ENCODE measurements at regions of chr14 and their contacts with region 1.

Region 1: DNA sequence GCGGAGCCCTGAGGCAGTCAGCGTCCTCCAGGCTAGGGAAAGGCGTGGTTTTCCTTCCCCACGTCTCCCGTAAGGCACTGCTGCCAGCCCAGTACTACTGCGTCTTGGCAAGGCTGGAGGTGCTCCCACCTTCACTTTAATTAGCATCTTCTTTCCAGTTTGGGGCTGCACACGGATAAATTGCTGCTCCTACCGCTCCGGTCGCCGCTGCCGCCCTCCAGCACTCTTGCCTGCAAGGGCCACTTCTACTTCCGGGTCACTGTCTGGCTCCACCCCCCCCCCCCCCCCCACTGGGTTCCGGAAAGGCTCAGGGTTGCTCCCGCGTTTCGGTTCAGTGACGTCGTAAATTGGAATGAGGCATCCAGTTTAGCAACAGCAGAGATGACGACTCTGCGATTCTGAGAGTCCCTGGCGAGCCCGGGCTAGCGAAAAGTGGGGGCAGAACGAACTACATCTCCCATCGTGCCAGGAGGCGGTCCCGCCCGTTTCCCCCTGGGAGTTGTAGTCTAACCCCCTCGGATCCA is at the start of gene NEDD8:
- DNase-seq: peak; percentile 89 to 93
- ATAC-seq: peak; percentile 92 to 95
- H3K4me3 ChIP-seq: peak within 1 kb of the TSS; percentile 71 to 91 (median 86)
- H3K27ac ChIP-seq: peak within 1 kb of the TSS; percentile 85 to 96 (median 92)
- H3K4me1 ChIP-seq: peaks cover 32 to 41% of the 10 kb centered on the region in 2 donors
- H3K27me3 ChIP-seq: no peaks in the 10 kb centered on the region
- CTCF ChIP-seq: no peak
- POLR2A ChIP-seq: peak; percentile 54 to 81
- total RNA-seq, gene NEDD8: 141 to 178 (median 162) TPM

Region 2: GRCh38 chr14:24146978-24147760 is 85.0 kb before region 1 on chr14 and contains the start of gene RNF31:
- in situ Hi-C with region 1: no loop called
- intact Hi-C with region 1: loop called (anchors 2 kb)
- DNase-seq: peak; percentile 98 to 99
- ATAC-seq: peak; percentile 89 to 94
- H3K4me3 ChIP-seq: peak within 1 kb of the TSS; percentile 75 to 92 (median 84)
- H3K27ac ChIP-seq: peak within 1 kb of the TSS; percentile 92 to 97 (median 92)
- H3K4me1 ChIP-seq: peaks cover 21% of the 10 kb centered on the region in 2 donors
- H3K27me3 ChIP-seq: no peaks in the 10 kb centered on the region
- CTCF ChIP-seq: no peak
- POLR2A ChIP-seq: peak; percentile 72 to 82
- total RNA-seq, gene RNF31: 63.3 to 140 (median 82.4) TPM

Region 3: DNA sequence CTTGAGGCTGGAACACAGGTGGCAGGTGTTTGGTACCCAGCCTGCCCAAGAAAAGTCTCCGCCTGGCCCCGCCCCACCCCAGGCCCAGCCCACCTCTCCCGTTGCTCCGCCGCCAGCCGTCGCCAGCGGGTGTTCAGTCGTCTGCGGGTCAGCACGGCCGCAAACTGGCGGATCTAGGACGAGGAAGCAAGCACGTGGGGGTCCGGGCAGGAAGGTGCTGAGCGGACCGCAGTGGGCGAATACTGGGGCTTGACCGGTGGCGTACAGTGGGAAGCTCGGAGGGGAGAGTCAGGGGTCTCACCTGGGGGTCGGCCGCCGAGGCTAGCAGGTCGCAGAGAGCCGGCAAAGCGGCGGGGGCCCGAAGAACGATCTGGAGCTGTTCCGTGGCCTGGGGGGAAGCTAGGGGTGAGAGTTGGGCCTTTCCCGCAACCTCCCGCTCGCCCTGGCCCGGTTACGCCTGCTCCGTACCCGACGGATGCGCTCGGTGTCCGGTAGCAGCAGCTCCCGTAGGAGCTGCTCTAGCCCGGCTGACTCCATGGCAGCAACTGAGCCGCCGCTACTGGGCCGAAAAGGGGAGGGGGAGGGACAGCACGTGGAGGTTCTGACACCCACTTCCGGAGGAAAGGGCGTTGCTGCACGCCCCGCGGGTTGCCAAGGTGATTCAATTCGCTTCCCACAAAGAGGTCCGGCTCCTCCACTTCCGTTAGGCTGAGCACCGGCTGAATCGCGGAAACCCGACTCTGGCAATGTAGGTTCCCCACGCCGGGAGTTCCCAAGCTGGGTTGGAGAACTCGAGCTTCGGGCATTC is 43.7 kb before region 1 on chr14 and contains the start of gene IPO4:
- in situ Hi-C with region 1: no loop called
- intact Hi-C with region 1: loop called (anchors 1 kb)
- DNase-seq: peak; percentile 96 to 97
- ATAC-seq: peak; percentile 99
- H3K4me3 ChIP-seq: peak within 1 kb of the TSS; percentile 62 to 84 (median 82)
- H3K27ac ChIP-seq: peak within 1 kb of the TSS; percentile 83 to 90 (median 86)
- H3K4me1 ChIP-seq: peaks cover 12 to 16% of the 10 kb centered on the region in 2 donors
- H3K27me3 ChIP-seq: no peaks in the 10 kb centered on the region
- CTCF ChIP-seq: no peak
- POLR2A ChIP-seq: peak; percentile 86
- total RNA-seq, gene IPO4: 35.7 to 73.2 (median 55.4) TPM

Region 4: DNA sequence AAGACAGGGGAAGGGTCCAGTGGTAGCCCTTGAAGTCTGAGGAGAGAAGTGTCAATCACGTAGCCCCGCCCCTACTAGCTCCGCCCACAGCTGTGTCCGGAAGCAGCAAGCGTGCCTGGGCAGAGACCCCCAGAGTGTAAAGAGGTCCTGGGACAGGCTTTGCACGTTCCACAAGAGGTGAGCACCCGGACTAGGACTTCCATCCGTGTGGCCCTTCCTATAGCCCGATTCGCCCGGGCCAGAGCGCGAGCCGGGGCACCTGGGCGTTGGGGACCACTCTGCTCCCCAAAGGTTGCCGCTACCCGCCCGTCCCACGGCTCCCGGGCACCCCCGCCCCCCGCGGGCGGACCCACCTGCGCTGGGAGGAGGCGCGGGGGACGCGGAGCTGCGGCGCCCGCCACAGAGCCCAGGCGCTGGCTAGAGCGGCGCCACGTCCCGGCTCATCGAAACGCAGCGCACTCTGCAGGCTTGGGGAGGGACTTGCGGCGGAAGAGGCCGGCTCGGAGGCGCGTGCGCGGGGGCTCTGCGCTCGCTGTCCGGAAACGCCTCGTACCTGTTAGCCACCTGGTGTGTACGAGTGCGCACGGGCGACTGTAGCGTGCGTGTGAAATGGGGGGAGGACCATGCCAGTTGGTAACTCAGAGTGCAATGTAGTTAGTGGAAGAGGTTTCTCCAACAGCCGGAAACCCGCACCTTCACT is 39.1 kb after region 1 on chr14 and contains the start of gene RABGGTA:
- in situ Hi-C with region 1: no loop called
- intact Hi-C with region 1: loop called (anchors 1 kb)
- DNase-seq: peak; percentile 65 to 81
- ATAC-seq: peak; percentile 95 to 97
- H3K4me3 ChIP-seq: peak within 1 kb of the TSS; percentile 78 to 98 (median 94)
- H3K27ac ChIP-seq: peak within 1 kb of the TSS; percentile 87 to 99 (median 98)
- H3K4me1 ChIP-seq: peaks cover 4 to 6% of the 10 kb centered on the region in 2 donors
- H3K27me3 ChIP-seq: no peaks in the 10 kb centered on the region
- CTCF ChIP-seq: peak; percentile 42 to 82 (median 70)
- POLR2A ChIP-seq: peak; percentile 35 to 48
- total RNA-seq, gene RABGGTA: 20.9 to 32.8 (median 28.0) TPM

Region 5: GRCh38 chr14:24398653-24399446 is 166.7 kb after region 1 on chr14 and contains the start of gene NYNRIN:
- in situ Hi-C with region 1: no loop called
- intact Hi-C with region 1: no loop called
- DNase-seq: no peak
- ATAC-seq: peak; percentile 50 to 68
- H3K4me3 ChIP-seq: peak within 1 kb of the TSS; percentile 57 to 69 (median 58)
- H3K27ac ChIP-seq: peak within 1 kb of the TSS; percentile 55 to 73 (median 70)
- H3K4me1 ChIP-seq: peaks cover 12 to 24% of the 10 kb centered on the region in 2 donors
- H3K27me3 ChIP-seq: peaks cover 0 to 10% (median 0%) of the 10 kb centered on the region in 3 donors
- CTCF ChIP-seq: no peak
- POLR2A ChIP-seq: no peak
- total RNA-seq, gene NYNRIN: 0.87 to 3.7 (median 2.1) TPM

Measured in gastrocnemius medialis (tissue), 4 donors.